HepG2 (cell line): ENCODE measurements at regions of chr10 and their contacts with region 1.

Region 1: DNA sequence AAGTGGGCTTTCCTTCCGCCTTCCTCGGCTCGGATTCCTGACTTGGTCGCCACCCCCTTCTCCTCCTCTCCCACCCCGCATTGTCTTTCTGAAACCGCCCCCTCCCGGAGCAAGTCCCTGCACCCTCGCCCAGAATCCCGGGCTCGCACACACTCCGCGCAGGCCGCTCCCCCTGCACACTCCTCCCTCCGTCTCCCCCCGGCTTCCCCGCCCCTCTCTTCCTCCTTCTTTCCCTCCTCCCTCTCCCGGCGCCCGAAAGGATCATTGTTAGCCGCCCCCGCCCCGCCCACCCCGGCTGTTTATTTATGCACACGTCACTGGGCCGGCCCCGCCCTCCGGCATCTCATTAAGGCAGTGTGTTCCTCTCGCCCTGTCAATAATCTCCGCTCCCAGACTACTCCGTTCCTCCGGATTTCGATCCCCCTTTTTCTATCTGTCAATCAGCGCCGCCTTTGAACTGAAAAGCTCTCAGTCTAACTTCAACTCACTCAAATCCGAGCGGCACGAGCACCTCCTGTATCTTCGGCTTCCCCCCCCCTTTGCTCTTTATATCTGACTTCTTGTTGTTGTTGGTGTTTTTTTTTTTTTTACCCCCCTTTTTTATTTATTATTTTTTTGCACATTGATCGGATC is at the start of gene TCF7L2:
- DNase-seq: peak; percentile 98
- ATAC-seq: peak; percentile 81
- H3K4me3 ChIP-seq: peak within 1 kb of the TSS; percentile 81 to 99 (median 93)
- H3K27ac ChIP-seq: peak within 1 kb of the TSS; percentile 91
- H3K4me1 ChIP-seq: peaks cover 54% of the 10 kb centered on the region
- H3K27me3 ChIP-seq: no peaks in the 10 kb centered on the region; a peak in 1 of 5 replicates
- CTCF ChIP-seq: peak; percentile 36
- EP300 ChIP-seq: peak in 1 of 2 experiments; percentile 47; a peak in 1 of 4 replicates
- POLR2A ChIP-seq: peak; percentile 55 to 56; a peak in 3 of 4 replicates
- RAD21 ChIP-seq: no peak
- total RNA-seq, gene TCF7L2: 3.5 and 3.9 TPM in 2 replicates

Region 2: GRCh38 chr10:112565434-112566053 is 384.4 kb before region 1 on chr10:
- CTCF ChIA-PET with region 1: no interaction called
- POLR2A ChIA-PET with region 1: no interaction called
- in situ Hi-C with region 1: loop called (anchors 10 kb)
- intact Hi-C with region 1: loop called (anchors 2 kb)
- DNase-seq: peak; percentile 79
- ATAC-seq: peak; percentile 41; the same call in 1 of the 3 replicates
- H3K4me3 ChIP-seq: no peak overlapping the region
- H3K27ac ChIP-seq: no peak overlapping the region
- H3K4me1 ChIP-seq: peaks cover 49% of the 10 kb centered on the region
- H3K27me3 ChIP-seq: no peaks in the 10 kb centered on the region
- CTCF ChIP-seq: peak; percentile 78
- EP300 ChIP-seq: peak in 1 of 2 experiments; percentile 18; a peak in 1 of 4 replicates
- POLR2A ChIP-seq: no peak
- RAD21 ChIP-seq: peak; percentile 70; the same call in 1 of the 2 replicates

Region 3: DNA sequence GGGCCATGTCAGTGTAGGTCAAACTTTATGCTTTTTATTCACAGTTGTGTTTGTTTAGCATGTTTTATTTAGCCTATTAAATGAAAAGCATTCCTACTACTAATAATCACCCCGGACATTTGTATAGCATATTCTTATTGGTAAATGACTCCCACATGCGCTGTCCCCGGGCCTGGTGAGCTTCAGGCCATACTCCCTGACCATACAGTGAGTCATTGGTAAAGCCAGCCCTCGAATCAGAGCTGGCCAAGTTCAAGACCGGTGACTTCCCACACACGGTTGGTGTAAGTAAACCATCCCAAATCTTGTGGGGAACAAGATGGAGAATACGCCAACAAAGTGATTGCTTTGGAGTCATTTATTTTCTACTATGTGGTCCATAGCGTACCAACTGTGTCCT is 238.6 kb before region 1 on chr10:
- CTCF ChIA-PET with region 1: no interaction called
- POLR2A ChIA-PET with region 1: no interaction called
- in situ Hi-C with region 1: no loop called
- intact Hi-C with region 1: no loop called
- DNase-seq: no peak
- ATAC-seq: no peak
- H3K4me3 ChIP-seq: no peak overlapping the region
- H3K27ac ChIP-seq: no peak overlapping the region
- H3K4me1 ChIP-seq: peaks cover 18% of the 10 kb centered on the region
- H3K27me3 ChIP-seq: no peaks in the 10 kb centered on the region
- CTCF ChIP-seq: no peak
- EP300 ChIP-seq: no peak
- POLR2A ChIP-seq: no peak
- RAD21 ChIP-seq: no peak

Region 4: GRCh38 chr10:112741830-112742411 is 208.1 kb before region 1 on chr10:
- CTCF ChIA-PET with region 1: no interaction called
- POLR2A ChIA-PET with region 1: interaction called, 7 read pairs
- in situ Hi-C with region 1: no loop called
- intact Hi-C with region 1: loop called (anchors 5 kb)
- DNase-seq: peak; percentile 76
- ATAC-seq: no peak
- H3K4me3 ChIP-seq: no peak overlapping the region
- H3K27ac ChIP-seq: peak overlapping the region; percentile 92
- H3K4me1 ChIP-seq: peaks cover 86% of the 10 kb centered on the region
- H3K27me3 ChIP-seq: no peaks in the 10 kb centered on the region
- CTCF ChIP-seq: no peak
- EP300 ChIP-seq: peak in 1 of 2 experiments; percentile 87; a peak in 2 of 4 replicates
- POLR2A ChIP-seq: no peak
- RAD21 ChIP-seq: no peak

Region 5: GRCh38 chr10:112858986-112859651 is 90.9 kb before region 1 on chr10:
- CTCF ChIA-PET with region 1: no interaction called
- POLR2A ChIA-PET with region 1: no interaction called
- in situ Hi-C with region 1: no loop called
- intact Hi-C with region 1: no loop called
- DNase-seq: no peak
- ATAC-seq: no peak
- H3K4me3 ChIP-seq: no peak overlapping the region
- H3K27ac ChIP-seq: no peak overlapping the region
- H3K4me1 ChIP-seq: no peaks in the 10 kb centered on the region
- H3K27me3 ChIP-seq: no peaks in the 10 kb centered on the region
- CTCF ChIP-seq: no peak
- EP300 ChIP-seq: no peak
- POLR2A ChIP-seq: no peak
- RAD21 ChIP-seq: no peak

Region 6: DNA sequence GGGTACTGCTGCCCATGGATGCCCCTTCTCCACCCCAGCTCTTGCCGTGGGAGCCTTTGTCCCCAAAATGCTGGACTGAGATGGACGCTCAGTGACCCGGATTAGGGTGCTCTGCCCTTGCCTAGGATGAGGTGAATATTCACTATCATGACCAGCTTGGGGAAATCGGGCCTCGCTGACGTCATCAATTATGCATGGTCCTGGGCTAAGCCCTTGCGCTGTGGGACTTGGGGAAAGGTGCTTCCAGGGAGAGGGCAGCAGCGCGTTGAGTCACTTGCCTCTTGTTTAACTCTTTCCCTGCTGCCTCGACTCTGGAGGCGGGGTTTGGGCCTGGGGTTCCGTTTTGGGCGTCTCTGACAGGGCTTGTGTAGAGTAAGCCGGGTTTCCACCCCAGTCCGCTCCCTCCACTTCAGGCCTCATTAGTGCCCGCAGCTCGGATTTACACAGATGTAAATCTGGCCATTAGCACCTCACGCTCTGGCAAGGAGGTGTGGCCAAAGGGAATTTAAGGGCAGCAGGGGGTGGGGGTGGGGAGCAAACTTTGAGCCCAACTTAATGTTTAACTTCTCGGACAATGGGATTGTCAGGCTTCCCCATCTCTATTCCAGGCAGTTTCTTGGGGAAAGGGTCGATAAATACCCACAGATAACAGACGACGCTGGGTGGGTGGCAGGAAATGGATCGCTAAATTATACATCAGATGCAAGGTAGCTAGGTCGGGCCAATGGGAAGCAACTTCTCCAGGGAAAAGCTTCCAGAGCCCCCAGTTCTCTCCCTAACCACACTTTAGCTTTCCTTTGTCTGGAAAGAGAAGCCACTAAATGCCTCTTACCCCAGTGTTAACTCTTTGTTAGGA is 51.2 kb before region 1 on chr10:
- CTCF ChIA-PET with region 1: no interaction called
- POLR2A ChIA-PET with region 1: interaction called, 18 read pairs
- in situ Hi-C with region 1: no loop called
- intact Hi-C with region 1: loop called (anchors 2 kb)
- DNase-seq: peak; percentile 90
- ATAC-seq: peak; percentile 82
- H3K4me3 ChIP-seq: peak overlapping the region; percentile 52 to 67 (median 53)
- H3K27ac ChIP-seq: peak overlapping the region; percentile 83
- H3K4me1 ChIP-seq: peaks cover 61% of the 10 kb centered on the region
- H3K27me3 ChIP-seq: no peaks in the 10 kb centered on the region
- CTCF ChIP-seq: peak; percentile 36
- EP300 ChIP-seq: peak in 1 of 2 experiments; percentile 79; a peak in 3 of 4 replicates
- POLR2A ChIP-seq: peak; percentile 54 to 56; a peak in 3 of 4 replicates
- RAD21 ChIP-seq: peak; percentile 30; the same call in 1 of the 2 replicates

Region 7: DNA sequence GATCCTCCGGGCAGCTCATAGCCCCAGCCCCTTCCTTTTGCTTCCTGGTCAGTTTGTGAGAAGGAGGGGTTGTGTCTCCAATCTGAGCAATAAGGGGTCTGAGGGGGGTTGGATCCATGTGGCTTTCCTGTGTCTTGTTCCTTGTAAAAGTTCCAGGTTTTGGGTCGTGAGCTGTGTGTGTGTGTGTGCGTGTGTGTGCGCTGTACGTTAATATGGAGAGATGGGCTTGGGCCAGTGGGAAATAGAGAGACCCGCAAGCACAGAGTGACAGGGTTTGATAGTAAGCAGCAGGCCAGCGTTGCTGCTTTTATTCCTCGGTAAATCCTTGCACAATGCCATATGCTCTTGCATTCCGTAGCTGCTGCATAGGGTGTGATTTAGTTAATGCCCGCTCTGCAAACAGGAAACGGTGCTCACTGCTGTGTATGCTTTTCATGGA is 108.6 kb after region 1 on chr10:
- CTCF ChIA-PET with region 1: no interaction called
- POLR2A ChIA-PET with region 1: interaction called, 3 read pairs
- in situ Hi-C with region 1: no loop called
- intact Hi-C with region 1: loop called (anchors 10 kb)
- DNase-seq: peak; percentile 67
- ATAC-seq: peak; percentile 79
- H3K4me3 ChIP-seq: peak overlapping the region; percentile 18 to 51 (median 41); a peak in 5 of 6 replicates
- H3K27ac ChIP-seq: peak overlapping the region; percentile 60
- H3K4me1 ChIP-seq: peaks cover 76% of the 10 kb centered on the region
- H3K27me3 ChIP-seq: no peaks in the 10 kb centered on the region
- CTCF ChIP-seq: no peak
- EP300 ChIP-seq: no peak
- POLR2A ChIP-seq: no peak
- RAD21 ChIP-seq: no peak